Left cardiac atrium (tissue), 4 donors: ENCODE measurements at regions of chr14 and their contacts with region 1.

Region 1: DNA sequence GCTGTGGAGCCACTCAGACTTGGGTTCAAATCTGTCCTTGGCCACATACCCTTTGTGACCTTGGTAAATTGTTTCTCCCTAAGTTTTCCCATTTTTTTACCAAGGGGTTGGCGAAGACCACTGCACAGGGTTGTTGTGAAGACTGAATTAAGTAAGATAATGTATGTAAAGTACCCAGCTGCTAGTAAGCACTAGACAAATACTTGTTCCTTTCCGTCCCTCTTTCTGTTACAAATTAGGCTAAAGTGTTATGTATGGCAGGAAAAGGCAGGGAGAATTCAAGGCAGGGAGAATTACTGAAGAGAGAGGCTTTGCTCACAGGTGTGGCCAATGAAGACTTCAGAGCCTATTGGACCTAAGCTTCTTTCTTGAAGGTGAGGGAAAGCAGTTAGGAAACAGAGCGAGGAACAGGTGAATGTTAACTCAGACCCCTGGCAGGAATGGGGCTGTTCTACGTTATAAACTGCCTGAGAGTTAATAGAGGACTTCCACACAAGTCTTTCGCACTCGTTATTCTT is 25.9 kb downstream of the ABHD12B start:
- DNase-seq: no peak
- ATAC-seq: no peak

Region 2: GRCh38 chr14:50875359-50876070 is 22.2 kb before region 1 on chr14:
- intact Hi-C with region 1: loop called in 1 of 2 experiments (anchors 2 kb)
- DNase-seq: no peak
- ATAC-seq: no peak